ENCODE measurements at regions of chr6 and their contacts with region 1.

Region 1: DNA sequence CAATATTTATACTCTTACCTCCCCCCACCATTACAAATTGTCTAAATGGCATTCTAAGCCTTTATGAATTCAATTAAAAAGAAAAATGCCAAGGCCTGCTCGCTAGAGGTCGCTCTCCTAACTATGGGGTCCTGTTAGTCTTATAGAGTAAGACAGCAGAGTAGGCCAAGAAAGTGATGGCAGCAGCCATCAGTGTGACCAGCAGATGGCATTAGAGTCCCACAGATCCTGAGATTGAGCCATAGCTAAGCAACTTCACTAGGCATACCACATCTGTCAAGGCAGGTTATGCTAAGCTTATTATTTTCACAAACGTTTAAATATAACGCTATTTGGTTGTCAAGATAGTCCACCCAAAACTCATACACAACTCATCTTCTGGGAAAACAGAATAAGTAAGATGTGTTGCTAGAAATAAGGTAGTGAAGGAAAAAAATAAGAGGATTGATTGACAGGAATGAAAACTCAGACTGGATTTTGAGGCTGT is 57.6 kb upstream of the SCAF8 start:
- DNase-seq: peak; percentile 60 to 89 (median 86)
- ATAC-seq: peak; percentile 100
- H3K4me3 ChIP-seq: no peak overlapping the region
- H3K4me3 Mint-ChIP-seq: no peak overlapping the region
- H3K27ac ChIP-seq: no peak overlapping the region
- H3K27ac Mint-ChIP-seq: no peak overlapping the region
- H3K4me1 ChIP-seq: no peaks in the 10 kb centered on the region
- H3K4me1 Mint-ChIP-seq: no peaks in the 10 kb centered on the region
- H3K27me3 ChIP-seq: no peaks in the 10 kb centered on the region
- H3K27me3 Mint-ChIP-seq: peaks cover 0 to 3% (median 0%) of the 10 kb centered on the region in 5 donors

Region 2: DNA sequence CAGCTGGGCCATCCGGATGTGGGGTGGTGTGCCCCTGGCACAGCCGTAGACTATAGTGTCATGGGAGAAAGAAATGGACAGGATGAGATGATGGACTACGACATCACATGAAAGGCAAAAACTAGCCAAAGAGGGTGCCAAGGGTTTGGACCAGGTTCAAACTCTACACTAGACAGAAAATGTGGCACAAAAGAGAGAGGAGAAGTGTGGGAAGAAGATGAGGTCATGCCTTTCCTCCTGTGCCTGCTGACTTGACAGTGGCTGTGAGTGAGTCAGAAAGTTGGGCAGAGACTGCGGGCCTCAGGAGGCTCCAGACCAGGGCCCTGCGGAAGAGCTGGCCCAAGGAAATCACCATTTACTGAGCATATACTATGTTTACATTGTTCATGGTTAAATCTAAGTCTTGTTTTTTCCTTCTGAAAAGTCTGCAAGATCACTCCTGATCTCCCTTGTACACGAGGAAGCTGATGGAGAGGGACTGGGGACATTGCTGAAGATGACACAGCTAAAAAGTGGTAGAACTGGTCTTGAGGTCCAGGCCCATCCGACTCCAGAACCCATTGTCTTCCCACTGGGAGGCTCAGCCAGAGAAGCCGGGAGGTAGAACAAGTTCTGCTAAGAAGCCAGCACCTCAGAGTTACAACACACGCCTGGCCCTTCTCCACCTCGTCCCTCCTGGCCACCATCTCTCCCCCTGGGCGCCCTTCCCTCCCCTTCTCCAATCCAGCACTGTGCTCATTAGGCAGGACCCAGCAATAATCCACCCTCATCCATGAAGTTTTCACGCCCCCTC is 200.8 kb before region 1 on chr6:
- CTCF ChIA-PET with region 1: no interaction called
- POLR2A ChIA-PET with region 1: no interaction called
- intact Hi-C with region 1: no loop called
- DNase-seq: no peak
- ATAC-seq: no peak
- H3K4me3 ChIP-seq: no peak overlapping the region
- H3K4me3 Mint-ChIP-seq: no peak overlapping the region
- H3K27ac ChIP-seq: no peak overlapping the region
- H3K27ac Mint-ChIP-seq: no peak overlapping the region
- H3K4me1 ChIP-seq: no peaks in the 10 kb centered on the region
- H3K4me1 Mint-ChIP-seq: peaks cover 0 to 3% (median 0%) of the 10 kb centered on the region in 7 donors
- H3K27me3 ChIP-seq: no peaks in the 10 kb centered on the region
- H3K27me3 Mint-ChIP-seq: peaks cover 0 to 8% (median 0%) of the 10 kb centered on the region in 5 donors

Region 3: DNA sequence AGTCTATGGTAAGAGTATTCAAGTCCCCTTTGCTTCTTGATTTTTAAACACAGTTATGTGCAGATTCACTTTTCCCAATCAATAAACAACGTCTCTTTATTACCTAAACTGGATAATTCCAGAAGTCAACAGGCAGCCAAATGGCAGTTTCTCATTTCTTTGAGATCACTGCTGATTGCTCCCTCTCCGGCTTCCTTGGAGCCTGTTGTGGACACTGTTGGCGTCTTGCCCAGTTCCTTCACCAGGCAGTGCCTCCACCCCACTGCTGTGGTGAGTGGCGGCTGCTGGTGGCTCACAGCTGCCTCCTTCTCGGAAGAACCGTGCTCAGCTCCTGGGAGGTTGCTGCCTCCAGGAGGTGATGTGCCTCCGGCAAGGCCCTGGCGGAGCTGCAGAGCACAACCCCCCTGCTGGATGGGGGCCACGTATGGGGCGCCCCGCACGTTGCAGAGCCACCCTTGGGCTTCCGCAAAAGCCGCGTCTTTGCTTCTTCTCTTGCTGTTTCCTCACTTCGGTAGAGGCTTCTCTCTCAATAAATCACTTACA is 60.1 kb before region 1 on chr6:
- CTCF ChIA-PET with region 1: no interaction called
- POLR2A ChIA-PET with region 1: no interaction called
- intact Hi-C with region 1: no loop called
- DNase-seq: no peak
- ATAC-seq: no peak
- H3K4me3 ChIP-seq: no peak overlapping the region
- H3K4me3 Mint-ChIP-seq: no peak overlapping the region
- H3K27ac ChIP-seq: no peak overlapping the region
- H3K27ac Mint-ChIP-seq: no peak overlapping the region
- H3K4me1 ChIP-seq: no peaks in the 10 kb centered on the region
- H3K4me1 Mint-ChIP-seq: peaks cover 0 to 2% (median 0%) of the 10 kb centered on the region in 7 donors
- H3K27me3 ChIP-seq: no peaks in the 10 kb centered on the region
- H3K27me3 Mint-ChIP-seq: peaks cover 0 to 5% (median 0%) of the 10 kb centered on the region in 5 donors

Region 4: GRCh38 chr6:154733012-154733625 is 57.5 kb after region 1 on chr6 and contains the start of gene SCAF8:
- CTCF ChIA-PET with region 1: interaction called, 3 read pairs
- POLR2A ChIA-PET with region 1: no interaction called
- intact Hi-C with region 1: loop called (anchors 1 kb)
- DNase-seq: peak; percentile 72 to 96 (median 90)
- ATAC-seq: peak; percentile 88
- H3K4me3 ChIP-seq: peak within 1 kb of the TSS; percentile 81
- H3K4me3 Mint-ChIP-seq: peak within 1 kb of the TSS; percentile 89 to 98 (median 92)
- H3K27ac ChIP-seq: peak within 1 kb of the TSS; percentile 93
- H3K27ac Mint-ChIP-seq: peak within 1 kb of the TSS; percentile 85 to 99 (median 93)
- H3K4me1 ChIP-seq: peaks cover 26 to 36% of the 10 kb centered on the region in 2 donors
- H3K4me1 Mint-ChIP-seq: peaks cover 20 to 49% (median 44%) of the 10 kb centered on the region in 7 donors
- H3K27me3 ChIP-seq: no peaks in the 10 kb centered on the region
- H3K27me3 Mint-ChIP-seq: no peaks in the 10 kb centered on the region
- total RNA-seq, gene SCAF8: 41.1 to 69.2 (median 54.9) TPM

Region 5: DNA sequence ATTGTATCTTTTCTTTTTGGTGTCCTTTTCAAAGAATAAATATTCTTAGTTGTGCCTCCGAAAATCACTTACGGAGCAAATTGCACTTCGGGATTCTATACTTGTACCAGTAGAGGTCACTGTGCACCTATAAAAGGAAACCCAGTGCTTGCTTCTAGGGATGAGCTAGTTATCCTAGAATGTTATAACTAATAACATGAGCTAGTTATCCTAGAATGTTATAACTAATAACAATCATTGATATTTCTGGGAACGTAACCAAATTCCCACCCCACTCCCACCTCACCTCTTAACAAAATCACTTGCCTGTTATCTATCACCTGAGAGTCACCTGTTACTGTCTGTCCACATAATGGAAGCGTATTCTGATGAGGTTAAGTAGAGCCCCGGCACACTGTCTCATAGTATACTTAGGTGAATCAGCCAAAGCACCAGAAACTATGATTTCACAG is 192.5 kb after region 1 on chr6:
- CTCF ChIA-PET with region 1: no interaction called
- POLR2A ChIA-PET with region 1: no interaction called
- intact Hi-C with region 1: loop called in 1 of 2 experiments (anchors 1 kb)
- DNase-seq: peak in 5 of 9 donors; percentile 1 to 26 (median 5)
- ATAC-seq: no peak
- H3K4me3 ChIP-seq: no peak overlapping the region
- H3K4me3 Mint-ChIP-seq: no peak overlapping the region
- H3K27ac ChIP-seq: no peak overlapping the region
- H3K27ac Mint-ChIP-seq: no peak overlapping the region
- H3K4me1 ChIP-seq: no peaks in the 10 kb centered on the region
- H3K4me1 Mint-ChIP-seq: peaks cover 0 to 24% (median 5%) of the 10 kb centered on the region in 7 donors
- H3K27me3 ChIP-seq: no peaks in the 10 kb centered on the region
- H3K27me3 Mint-ChIP-seq: no peaks in the 10 kb centered on the region

Region 6: GRCh38 chr6:155248008-155249001 is 572.7 kb after region 1 on chr6:
- CTCF ChIA-PET with region 1: interaction called, 3 read pairs
- POLR2A ChIA-PET with region 1: no interaction called
- intact Hi-C with region 1: loop called in 1 of 2 experiments (anchors 2 kb)
- DNase-seq: no peak
- ATAC-seq: peak; percentile 41
- H3K4me3 ChIP-seq: no peak overlapping the region
- H3K4me3 Mint-ChIP-seq: no peak overlapping the region
- H3K27ac ChIP-seq: no peak overlapping the region
- H3K27ac Mint-ChIP-seq: peak overlapping the region in 3 of 9 donors; percentile 11 to 28 (median 24)
- H3K4me1 ChIP-seq: no peaks in the 10 kb centered on the region
- H3K4me1 Mint-ChIP-seq: no peaks in the 10 kb centered on the region
- H3K27me3 ChIP-seq: no peaks in the 10 kb centered on the region
- H3K27me3 Mint-ChIP-seq: no peaks in the 10 kb centered on the region